Dendritic cell treated with granulocyte-macrophage colony-stimulating factor and Interleukin-4, amounts not matched to agents 40 ng/mL and 50 ng/mL, for 4 days (primary cell): ENCODE measurements at regions of chr16 and their contacts with region 1.

Region 1: DNA sequence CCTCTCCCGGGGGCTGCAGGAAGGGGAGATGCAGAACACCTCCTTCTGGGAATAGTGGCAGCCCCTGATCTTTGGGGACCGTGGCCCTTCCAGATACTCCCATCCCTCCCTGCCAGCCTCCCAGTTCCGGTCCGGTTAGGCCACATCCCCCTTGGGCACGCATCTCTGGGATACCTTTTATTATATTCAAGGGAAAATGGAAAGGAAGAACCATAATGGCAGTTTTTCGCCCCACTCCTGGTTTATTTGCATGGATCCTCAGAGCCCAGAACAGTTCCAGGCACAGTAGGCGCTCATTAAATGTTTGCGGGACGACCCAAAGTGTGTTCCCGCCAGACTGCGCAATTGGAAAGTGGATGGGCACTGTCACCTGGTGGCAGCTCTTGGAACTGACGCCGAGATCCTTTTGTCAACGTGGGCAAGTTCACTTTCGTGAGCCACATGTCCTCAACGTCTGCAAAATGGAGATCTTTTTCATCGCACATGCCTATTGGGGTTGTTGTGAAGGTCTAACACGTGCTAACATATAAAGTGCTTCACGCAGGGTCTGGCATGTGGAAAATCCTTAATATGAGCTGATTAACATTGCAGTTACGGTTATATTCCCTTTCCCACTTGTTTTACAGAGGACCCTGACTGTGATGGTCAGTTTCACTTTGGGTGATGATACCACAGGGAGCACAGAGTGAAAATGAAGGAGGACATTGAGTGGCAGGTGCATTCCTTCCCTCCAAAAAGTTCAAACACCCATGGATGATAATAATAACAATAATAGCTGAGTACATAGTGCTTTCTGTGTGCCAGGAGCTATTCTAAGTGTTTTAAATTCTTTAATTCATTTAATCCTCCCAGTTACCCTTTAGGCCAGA is 1.7 kb upstream of the GPRC5B start:
- H3K4me3 Mint-ChIP-seq: peak overlapping the region; percentile 71
- H3K27ac Mint-ChIP-seq: no peak overlapping the region
- H3K4me1 Mint-ChIP-seq: peaks cover 35% of the 10 kb centered on the region
- H3K27me3 Mint-ChIP-seq: peaks cover 48% of the 10 kb centered on the region

Region 2: DNA sequence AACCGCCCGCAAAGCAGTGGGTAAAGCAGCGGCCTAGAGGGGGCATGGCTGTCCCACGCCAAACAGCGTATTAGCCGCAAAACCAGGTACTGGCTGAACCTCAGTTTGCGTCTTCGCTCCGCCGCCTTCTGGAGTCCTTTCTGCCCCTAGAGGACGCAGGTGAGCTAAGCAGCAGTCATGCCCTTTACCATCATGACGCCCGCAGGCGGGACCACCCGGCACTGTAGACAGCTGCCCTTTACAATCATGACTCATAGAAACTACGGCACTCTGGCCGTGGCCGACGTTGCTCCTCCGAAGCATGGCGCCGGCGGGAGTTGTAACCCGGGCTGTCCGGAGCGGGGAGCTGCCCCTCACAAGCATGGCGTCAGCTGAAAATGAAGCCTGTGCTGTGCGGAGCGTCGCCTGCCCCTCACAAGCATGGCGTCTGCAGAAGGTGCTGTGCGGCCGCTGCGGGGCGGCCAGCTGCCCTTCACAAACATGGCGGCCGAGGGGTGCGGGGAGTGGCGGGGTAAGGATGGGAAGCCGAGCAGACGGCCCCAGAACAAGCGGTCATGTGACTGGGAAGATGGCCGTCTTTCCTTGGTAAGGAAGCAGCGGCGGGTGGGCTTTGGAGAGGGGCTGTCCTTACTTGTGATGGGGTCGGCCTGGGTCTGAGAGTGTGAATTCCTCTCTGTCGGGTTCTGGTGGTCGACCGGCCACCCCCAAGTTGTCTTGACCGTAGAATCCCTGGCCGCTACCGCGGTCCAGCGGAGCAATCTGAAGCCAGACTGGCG is 331.0 kb before region 1 on chr16 and contains the start of gene VPS35L:
- intact Hi-C with region 1: loop called (anchors 1 kb)
- H3K4me3 Mint-ChIP-seq: peak within 1 kb of the TSS; percentile 75
- H3K27ac Mint-ChIP-seq: peak within 1 kb of the TSS; percentile 92
- H3K4me1 Mint-ChIP-seq: peaks cover 24% of the 10 kb centered on the region
- H3K27me3 Mint-ChIP-seq: no peaks in the 10 kb centered on the region

Region 3: GRCh38 chr16:19601083-19601976 is 285.0 kb before region 1 on chr16:
- intact Hi-C with region 1: loop called (anchors 2 kb)
- H3K4me3 Mint-ChIP-seq: no peak overlapping the region
- H3K27ac Mint-ChIP-seq: no peak overlapping the region
- H3K4me1 Mint-ChIP-seq: no peaks in the 10 kb centered on the region
- H3K27me3 Mint-ChIP-seq: no peaks in the 10 kb centered on the region

Region 4: GRCh38 chr16:19696328-19696727 is 190.0 kb before region 1 on chr16:
- intact Hi-C with region 1: loop called (anchors 10 kb)
- H3K4me3 Mint-ChIP-seq: no peak overlapping the region
- H3K27ac Mint-ChIP-seq: peak overlapping the region; percentile 60
- H3K4me1 Mint-ChIP-seq: peaks cover 26% of the 10 kb centered on the region
- H3K27me3 Mint-ChIP-seq: no peaks in the 10 kb centered on the region

Region 5: DNA sequence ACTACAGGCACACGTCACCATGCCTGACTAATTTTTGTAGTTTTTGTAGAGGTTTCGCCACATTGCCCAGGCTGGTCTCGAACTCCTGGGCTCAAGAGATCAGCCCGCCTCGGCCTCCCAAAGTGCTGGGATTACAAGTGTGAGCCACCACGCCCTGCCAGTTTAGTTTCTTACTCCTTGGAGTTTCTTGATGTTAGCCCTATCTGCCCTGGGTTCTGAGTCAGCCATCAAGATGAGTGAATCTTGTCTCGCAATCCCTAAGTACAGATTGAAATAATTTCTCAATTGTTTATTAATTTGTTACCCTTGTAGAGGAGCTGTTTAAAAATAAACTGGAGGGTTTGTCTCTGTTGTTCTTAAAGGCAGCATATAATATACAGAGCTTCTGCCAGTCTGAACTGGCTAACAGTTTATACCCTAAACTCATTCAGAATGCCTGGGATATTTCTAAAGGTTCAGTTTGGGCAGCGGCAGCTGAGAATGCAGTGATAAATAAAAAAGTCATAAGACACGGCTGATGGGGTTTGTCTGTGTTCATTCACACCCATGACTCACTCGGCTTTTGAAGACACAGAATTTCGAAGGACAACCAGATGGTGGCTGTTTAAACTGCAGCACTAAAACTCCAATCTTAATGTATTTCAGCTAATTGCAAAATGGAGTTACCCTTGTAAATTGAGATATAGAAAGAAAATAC is 41.2 kb before region 1 on chr16:
- intact Hi-C with region 1: no loop called
- H3K4me3 Mint-ChIP-seq: no peak overlapping the region
- H3K27ac Mint-ChIP-seq: no peak overlapping the region
- H3K4me1 Mint-ChIP-seq: no peaks in the 10 kb centered on the region
- H3K27me3 Mint-ChIP-seq: no peaks in the 10 kb centered on the region

Region 6: GRCh38 chr16:19860166-19861041 is 25.9 kb before region 1 on chr16:
- intact Hi-C with region 1: no loop called
- H3K4me3 Mint-ChIP-seq: no peak overlapping the region
- H3K27ac Mint-ChIP-seq: no peak overlapping the region
- H3K4me1 Mint-ChIP-seq: no peaks in the 10 kb centered on the region
- H3K27me3 Mint-ChIP-seq: no peaks in the 10 kb centered on the region

Region 7: GRCh38 chr16:20327444-20328041 is 441.2 kb after region 1 on chr16 and contains the start of gene GP2:
- intact Hi-C with region 1: no loop called
- H3K4me3 Mint-ChIP-seq: no peak within 1 kb of the TSS
- H3K27ac Mint-ChIP-seq: no peak within 1 kb of the TSS
- H3K4me1 Mint-ChIP-seq: no peaks in the 10 kb centered on the region
- H3K27me3 Mint-ChIP-seq: no peaks in the 10 kb centered on the region